AG04450 (cell line): ENCODE measurements at regions of chr3 and their contacts with region 1.

Region 1: GRCh38 chr3:167684388-167684993 is 30.7 kb upstream of the WDR49 start:
- DNase-seq: peak; percentile 24
- H3K4me3 ChIP-seq: no peak overlapping the region
- H3K27ac ChIP-seq: no peak overlapping the region
- H3K27me3 ChIP-seq: no peaks in the 10 kb centered on the region
- CTCF ChIP-seq: peak; percentile 62

Region 2: DNA sequence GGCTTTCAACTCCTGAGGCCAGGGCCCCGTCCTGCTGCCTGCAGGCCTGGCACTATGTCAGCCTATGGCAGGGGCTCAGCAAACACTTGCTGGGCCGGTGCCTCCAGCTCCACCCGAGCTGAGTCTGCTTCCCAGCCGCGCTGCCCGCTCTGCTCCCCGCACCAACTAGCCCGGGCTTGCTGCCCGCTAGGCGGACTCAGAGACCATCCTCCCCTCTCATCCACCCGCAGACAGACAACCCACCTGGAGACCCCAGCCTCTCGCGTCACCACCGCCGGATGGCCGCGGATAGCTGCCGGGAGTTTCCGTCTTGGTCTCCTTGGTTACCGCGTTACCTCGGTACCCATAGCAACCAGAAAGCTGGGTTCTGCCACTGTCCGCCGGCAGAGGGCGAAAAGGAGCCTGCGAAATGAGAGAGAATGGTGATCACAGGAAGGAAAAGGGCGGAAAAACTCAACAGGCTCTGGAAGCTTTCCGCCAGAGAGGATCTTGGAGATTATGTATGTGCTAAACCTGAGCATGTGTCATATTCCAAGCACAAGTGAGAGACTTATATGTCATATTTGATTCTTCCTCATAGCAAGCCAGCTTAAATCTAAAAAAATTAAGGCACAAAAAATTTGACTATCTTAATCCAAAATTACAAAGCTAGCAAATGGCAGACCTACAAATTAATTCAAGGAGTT is 304.3 kb before region 1 on chr3 and contains the start of gene ZBBX:
- CTCF ChIA-PET with region 1: interaction called, 40 read pairs
- POLR2A ChIA-PET with region 1: no interaction called
- DNase-seq: peak; percentile 53
- H3K4me3 ChIP-seq: peak within 1 kb of the TSS; percentile 67
- H3K27ac ChIP-seq: no peak within 1 kb of the TSS
- H3K27me3 ChIP-seq: no peaks in the 10 kb centered on the region
- CTCF ChIP-seq: peak; percentile 98
- polyA plus RNA-seq, gene ZBBX: not detected in 2 replicates

Region 3: GRCh38 chr3:167467848-167468611 is 216.5 kb before region 1 on chr3:
- CTCF ChIA-PET with region 1: no interaction called
- POLR2A ChIA-PET with region 1: no interaction called
- DNase-seq: no peak
- H3K4me3 ChIP-seq: no peak overlapping the region
- H3K27ac ChIP-seq: no peak overlapping the region
- H3K27me3 ChIP-seq: no peaks in the 10 kb centered on the region
- CTCF ChIP-seq: no peak

Region 4: DNA sequence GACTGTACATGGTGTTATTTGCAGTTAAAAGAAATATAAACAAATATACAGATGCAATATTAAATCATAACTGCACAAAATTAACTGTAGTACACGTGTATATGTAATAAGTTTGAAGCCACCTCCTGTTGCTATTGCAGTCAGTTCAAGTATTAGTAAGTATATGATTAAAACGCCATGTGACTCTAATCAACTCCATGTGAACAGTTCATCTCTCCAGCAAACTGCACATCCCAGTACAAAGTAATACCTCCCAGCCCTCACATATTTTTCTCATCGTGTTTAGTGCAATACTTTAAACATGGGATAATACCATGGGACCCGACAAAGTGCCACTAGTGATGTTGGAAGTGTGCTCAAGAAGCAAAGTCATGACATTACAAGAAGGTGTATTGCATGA is 15.6 kb after region 1 on chr3:
- CTCF ChIA-PET with region 1: interaction called, 31 read pairs
- POLR2A ChIA-PET with region 1: no interaction called
- DNase-seq: no peak
- H3K4me3 ChIP-seq: no peak overlapping the region
- H3K27ac ChIP-seq: no peak overlapping the region
- H3K27me3 ChIP-seq: no peaks in the 10 kb centered on the region
- CTCF ChIP-seq: no peak

Region 5: GRCh38 chr3:167723070-167723469 is 38.6 kb after region 1 on chr3:
- CTCF ChIA-PET with region 1: interaction called, 16 read pairs
- POLR2A ChIA-PET with region 1: no interaction called
- DNase-seq: no peak
- H3K4me3 ChIP-seq: no peak overlapping the region
- H3K27ac ChIP-seq: no peak overlapping the region
- H3K27me3 ChIP-seq: no peaks in the 10 kb centered on the region
- CTCF ChIP-seq: no peak

Region 6: GRCh38 chr3:167734498-167735232 is 50.2 kb after region 1 on chr3 and contains the start of gene PDCD10:
- CTCF ChIA-PET with region 1: interaction called, 12 read pairs
- POLR2A ChIA-PET with region 1: no interaction called
- DNase-seq: peak; percentile 96
- H3K4me3 ChIP-seq: peak within 1 kb of the TSS; percentile 88
- H3K27ac ChIP-seq: peak within 1 kb of the TSS; percentile 79
- H3K27me3 ChIP-seq: peaks cover 7% of the 10 kb centered on the region
- CTCF ChIP-seq: no peak
- polyA plus RNA-seq, gene PDCD10: 55.9 and 79.5 TPM in 2 replicates